Psoas muscle (tissue), 8 donors: ENCODE measurements at regions of chr6 and their contacts with region 1.

Region 1: GRCh38 chr6:57172136-57173055 is at the start of gene BAG2:
- DNase-seq: peak; percentile 90 to 94
- ATAC-seq: peak; percentile 96 to 98 (median 96)
- H3K4me3 ChIP-seq: peak within 1 kb of the TSS; percentile 89
- H3K27ac ChIP-seq: peak within 1 kb of the TSS; percentile 93
- H3K4me1 ChIP-seq: peaks cover 12% of the 10 kb centered on the region
- H3K27me3 ChIP-seq: no peaks in the 10 kb centered on the region
- CTCF ChIP-seq: peak; percentile 38
- total RNA-seq, gene BAG2: 7.3 to 9.3 (median 8.5) TPM

Region 2: DNA sequence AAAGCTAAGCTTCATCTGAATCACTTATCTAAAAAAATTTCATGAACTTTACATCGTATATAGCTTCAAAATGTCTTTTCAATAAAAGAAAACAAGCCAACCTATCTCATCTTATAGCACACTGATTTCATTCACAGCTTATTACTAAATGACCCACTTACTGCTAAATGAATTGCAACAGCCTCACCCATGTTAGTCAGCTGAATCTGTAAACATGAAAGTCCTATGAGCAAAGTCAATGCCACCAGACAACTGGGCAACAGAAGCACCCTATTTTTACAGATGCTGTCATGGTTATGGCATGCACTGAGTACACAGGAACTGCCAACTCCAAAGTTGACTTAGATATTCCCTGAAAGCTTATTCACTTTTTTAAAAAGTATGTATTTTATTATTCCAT is 488.5 kb before region 1 on chr6:
- intact Hi-C with region 1: loop called in 1 of 2 experiments (anchors 2 kb)
- DNase-seq: no peak
- ATAC-seq: peak; percentile 95 to 99 (median 98)
- H3K4me3 ChIP-seq: peak overlapping the region; percentile 47
- H3K27ac ChIP-seq: peak overlapping the region; percentile 91
- H3K4me1 ChIP-seq: peaks cover 50% of the 10 kb centered on the region
- H3K27me3 ChIP-seq: no peaks in the 10 kb centered on the region
- CTCF ChIP-seq: no peak

Region 3: DNA sequence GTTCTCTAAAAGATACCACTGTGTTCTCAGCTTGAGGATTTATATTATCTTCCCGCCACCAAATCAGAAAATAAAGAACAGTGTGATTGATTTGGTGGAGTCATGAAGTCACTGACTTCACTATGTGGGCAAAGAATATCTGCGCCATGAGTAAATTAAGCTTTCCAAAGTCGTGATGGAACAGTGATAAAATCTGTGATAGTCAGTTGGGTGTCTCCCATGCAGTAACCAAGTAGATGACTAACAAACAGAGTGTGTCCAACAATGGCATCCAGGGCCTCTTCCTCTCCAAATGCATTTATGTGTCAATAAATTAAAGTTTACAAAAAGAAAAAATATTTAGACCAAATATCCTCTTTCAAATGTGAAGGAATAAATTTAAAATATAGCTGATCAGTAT is 442.7 kb before region 1 on chr6:
- intact Hi-C with region 1: no loop called
- DNase-seq: no peak
- ATAC-seq: no peak
- H3K4me3 ChIP-seq: no peak overlapping the region
- H3K27ac ChIP-seq: no peak overlapping the region
- H3K4me1 ChIP-seq: peaks cover 44% of the 10 kb centered on the region
- H3K27me3 ChIP-seq: no peaks in the 10 kb centered on the region
- CTCF ChIP-seq: no peak

Region 4: DNA sequence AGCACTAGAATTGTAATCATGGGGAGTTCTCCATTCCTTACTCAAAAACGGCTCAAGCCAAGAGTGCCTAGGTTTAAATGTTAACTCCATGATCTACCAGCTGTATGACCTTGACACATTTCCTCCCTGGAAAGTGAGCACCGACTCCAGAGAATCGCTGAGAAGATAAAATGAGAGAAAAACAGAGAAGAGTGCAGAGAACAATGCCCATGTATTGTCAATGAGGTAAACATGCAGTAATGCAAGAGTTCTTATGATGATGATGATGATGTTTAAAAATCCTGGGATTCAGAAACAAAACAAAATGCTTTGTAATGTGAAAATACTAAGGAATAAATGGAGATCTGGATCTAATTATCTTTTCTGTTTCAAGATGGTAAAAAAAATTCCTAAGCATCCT is 282.3 kb before region 1 on chr6:
- intact Hi-C with region 1: no loop called
- DNase-seq: no peak
- ATAC-seq: no peak
- H3K4me3 ChIP-seq: no peak overlapping the region
- H3K27ac ChIP-seq: no peak overlapping the region
- H3K4me1 ChIP-seq: no peaks in the 10 kb centered on the region
- H3K27me3 ChIP-seq: no peaks in the 10 kb centered on the region
- CTCF ChIP-seq: no peak

Region 5: GRCh38 chr6:56902641-56903464 is 269.5 kb before region 1 on chr6:
- intact Hi-C with region 1: loop called in 1 of 2 experiments (anchors 10 kb)
- DNase-seq: no peak
- ATAC-seq: peak in 2 of 4 donors; percentile 42 to 56
- H3K4me3 ChIP-seq: peak overlapping the region; percentile 2
- H3K27ac ChIP-seq: no peak overlapping the region
- H3K4me1 ChIP-seq: no peaks in the 10 kb centered on the region
- H3K27me3 ChIP-seq: no peaks in the 10 kb centered on the region
- CTCF ChIP-seq: peak; percentile 72